Right lobe of liver (tissue), 6 donors: ENCODE measurements at regions of chr1 and their contacts with region 1.

Region 1: GRCh38 chr1:150979092-150980056 is 2.7 kb upstream of the ANXA9 start:
- DNase-seq: peak; percentile 76 to 83 (median 81)
- ATAC-seq: peak; percentile 31 to 47 (median 36)
- H3K4me3 ChIP-seq: peak overlapping the region; percentile 18 to 43 (median 30)
- H3K27ac ChIP-seq: peak overlapping the region; percentile 43 to 68 (median 56)
- H3K4me1 ChIP-seq: peaks cover 0 to 64% (median 26%) of the 10 kb centered on the region in 4 donors
- H3K27me3 ChIP-seq: no peaks in the 10 kb centered on the region
- CTCF ChIP-seq: peak; percentile 99 to 100 (median 100)
- POLR2A ChIP-seq: no peak

Region 2: DNA sequence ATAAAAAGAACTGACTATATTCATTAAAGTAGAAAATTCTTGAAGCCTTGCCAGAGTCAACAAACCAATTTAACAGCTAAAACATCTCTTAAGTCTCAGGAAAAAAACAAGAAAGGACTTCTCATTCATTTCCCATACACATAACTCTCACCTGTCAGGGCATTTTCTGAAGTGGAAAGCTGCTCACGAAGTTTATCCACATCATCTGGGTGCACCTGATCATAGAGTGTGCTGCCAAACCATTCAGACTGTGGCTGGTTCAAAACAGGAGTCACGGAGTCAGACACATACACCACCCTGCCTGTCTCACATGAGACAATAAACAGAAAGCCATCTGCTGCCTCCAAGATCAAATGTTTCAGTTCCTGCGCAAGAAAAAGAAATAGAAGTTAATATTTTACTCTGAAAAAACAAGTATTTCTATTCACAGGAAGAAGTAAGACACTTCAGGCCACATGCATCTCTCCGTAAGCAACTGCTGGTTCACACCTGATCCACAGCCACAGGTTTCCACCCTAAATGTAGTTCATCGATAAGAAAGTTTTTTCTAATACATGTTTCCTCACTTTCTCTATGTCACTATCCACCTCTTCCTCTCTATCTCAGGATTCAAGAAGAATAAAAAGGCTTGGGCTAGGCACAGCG is 143.1 kb before region 1 on chr1:
- intact Hi-C with region 1: no loop called
- DNase-seq: no peak
- ATAC-seq: peak; percentile 34 to 69 (median 62)
- H3K4me3 ChIP-seq: no peak overlapping the region
- H3K27ac ChIP-seq: no peak overlapping the region
- H3K4me1 ChIP-seq: peaks cover 0 to 13% (median 5%) of the 10 kb centered on the region in 4 donors
- H3K27me3 ChIP-seq: no peaks in the 10 kb centered on the region
- CTCF ChIP-seq: no peak
- POLR2A ChIP-seq: no peak

Region 3: DNA sequence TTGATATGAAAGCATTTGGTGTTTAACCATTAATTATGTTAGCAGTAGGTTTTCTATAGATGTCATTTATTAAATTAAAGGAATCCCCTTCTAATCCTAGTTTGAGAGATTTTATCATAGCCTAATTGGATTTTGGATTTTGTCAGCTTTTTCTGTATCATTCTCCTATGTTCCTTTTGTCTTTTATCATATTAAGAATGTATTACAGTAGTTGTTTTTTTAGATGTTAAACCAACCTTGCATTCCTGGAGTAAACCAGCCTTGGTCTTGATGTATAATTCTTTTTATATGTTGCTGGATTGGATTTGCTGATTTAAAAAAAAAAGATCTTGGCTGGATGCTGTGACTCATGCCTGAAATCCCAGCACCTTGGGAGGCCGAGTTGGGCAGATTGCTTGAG is 47.6 kb before region 1 on chr1:
- intact Hi-C with region 1: loop called in 1 of 2 experiments (anchors 10 kb)
- DNase-seq: no peak
- ATAC-seq: no peak
- H3K4me3 ChIP-seq: no peak overlapping the region
- H3K27ac ChIP-seq: no peak overlapping the region
- H3K4me1 ChIP-seq: peaks cover 0 to 7% (median 0%) of the 10 kb centered on the region in 4 donors
- H3K27me3 ChIP-seq: no peaks in the 10 kb centered on the region
- CTCF ChIP-seq: no peak
- POLR2A ChIP-seq: no peak